ENCODE measurements at regions of chr18 and their contacts with region 1.

Region 1: DNA sequence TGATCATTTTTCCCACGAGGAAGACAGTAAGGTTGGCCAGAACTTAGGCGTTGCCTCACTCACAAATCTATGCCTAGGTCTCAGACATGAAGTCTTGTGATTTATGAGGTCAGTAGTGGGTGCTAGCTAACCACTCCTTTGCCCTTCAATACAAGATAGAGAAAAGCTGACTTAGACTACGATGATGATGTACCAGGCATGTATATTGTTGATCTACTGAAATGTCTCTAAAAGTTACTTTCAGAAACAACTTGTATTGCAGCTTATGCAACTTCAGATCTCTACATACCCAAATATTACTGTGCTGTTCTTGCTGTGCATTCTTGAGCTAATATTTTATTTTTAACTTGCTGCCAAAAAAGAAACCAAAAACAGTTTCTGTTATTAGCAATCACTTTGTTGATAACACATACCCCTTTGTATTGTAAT is 30.6 kb downstream of the MAPRE2 start:
- DNase-seq: no peak

Region 2: DNA sequence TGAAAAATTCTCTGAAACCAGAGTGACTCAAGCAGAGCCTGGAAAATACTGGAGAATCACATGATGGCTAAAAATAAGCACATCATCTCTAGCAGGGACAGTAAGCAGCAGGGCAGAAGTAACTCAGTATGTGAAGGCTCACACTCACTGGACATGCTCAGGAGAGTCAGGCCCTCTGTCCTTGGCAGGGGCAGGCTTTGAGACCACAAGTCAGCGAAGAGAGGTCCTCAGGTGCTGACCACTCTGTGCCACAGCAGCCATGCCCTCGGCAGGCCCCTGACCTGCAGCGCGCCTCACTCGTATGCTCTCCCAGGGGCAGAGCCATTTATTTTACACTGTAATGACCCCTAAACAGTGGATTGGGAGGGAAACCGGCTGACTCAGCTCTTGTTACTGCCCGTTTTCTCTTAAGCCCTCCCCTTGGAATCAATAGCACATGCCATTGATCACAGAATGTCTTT is 46.1 kb after region 1 on chr18:
- intact Hi-C with region 1: loop called (anchors 5 kb)
- DNase-seq: no peak

Measured in cardiac septum (tissue), 1 donor.